H1 (cell line): ENCODE measurements at regions of chr2 and their contacts with region 1.

Region 1: DNA sequence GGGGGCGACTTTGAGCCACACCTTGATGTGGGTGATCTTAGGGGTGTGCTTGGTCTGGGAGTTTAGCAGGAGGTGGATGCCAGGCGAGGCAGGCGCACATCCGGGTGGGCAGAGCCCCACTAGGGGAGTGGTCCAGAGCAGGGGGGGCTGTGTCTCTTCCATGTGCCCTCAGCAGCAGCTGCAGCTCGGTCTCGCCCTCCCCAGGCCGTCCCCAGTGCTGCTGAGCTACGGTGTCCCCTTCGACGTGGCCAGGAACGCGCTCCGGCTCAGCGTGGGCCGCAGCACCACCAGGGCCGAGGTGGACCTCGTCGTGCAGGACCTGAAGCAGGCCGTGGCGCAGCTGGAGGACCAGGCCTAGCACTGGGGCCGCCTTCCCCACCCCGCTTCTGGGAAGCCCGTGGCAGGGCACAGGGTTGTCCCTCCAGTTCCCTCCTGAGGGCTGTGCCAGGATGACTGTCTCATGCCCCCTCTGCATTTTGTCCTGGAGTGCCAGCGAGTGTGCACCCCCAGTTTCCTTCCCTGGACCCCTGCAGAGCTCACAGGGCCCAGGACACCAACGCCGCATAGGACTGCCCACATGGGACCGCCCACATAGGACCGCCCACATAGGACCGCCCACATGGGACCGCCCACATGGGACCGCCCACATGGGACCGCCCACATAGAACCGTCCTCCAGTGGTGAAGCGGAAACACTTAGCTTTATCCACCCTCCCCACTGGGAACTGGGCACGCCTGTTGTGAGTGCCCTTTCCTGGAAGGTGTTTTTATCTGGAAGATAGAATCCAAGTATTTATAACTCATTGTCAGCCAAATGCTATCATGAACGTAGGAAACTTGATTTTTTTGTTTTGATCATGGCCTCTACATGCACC is 1.9 kb upstream of the ESPNL start:
- DNase-seq: peak; percentile 60 to 85
- H3K4me3 ChIP-seq: no peak overlapping the region
- H3K27ac ChIP-seq: peak overlapping the region; percentile 26; the same call in 1 of the 2 replicates
- H3K4me1 ChIP-seq: peaks cover 0 to 21% (median 13%) of the 10 kb centered on the region in 4 experiments; a peak in 6 of 7 replicates
- H3K27me3 ChIP-seq: no peaks in the 10 kb centered on the region
- CTCF ChIP-seq: no peak
- EP300 ChIP-seq: no peak
- POLR2A ChIP-seq: peak in 1 of 2 experiments; percentile 18; a peak in 1 of 3 replicates
- RAD21 ChIP-seq: no peak

Region 2: DNA sequence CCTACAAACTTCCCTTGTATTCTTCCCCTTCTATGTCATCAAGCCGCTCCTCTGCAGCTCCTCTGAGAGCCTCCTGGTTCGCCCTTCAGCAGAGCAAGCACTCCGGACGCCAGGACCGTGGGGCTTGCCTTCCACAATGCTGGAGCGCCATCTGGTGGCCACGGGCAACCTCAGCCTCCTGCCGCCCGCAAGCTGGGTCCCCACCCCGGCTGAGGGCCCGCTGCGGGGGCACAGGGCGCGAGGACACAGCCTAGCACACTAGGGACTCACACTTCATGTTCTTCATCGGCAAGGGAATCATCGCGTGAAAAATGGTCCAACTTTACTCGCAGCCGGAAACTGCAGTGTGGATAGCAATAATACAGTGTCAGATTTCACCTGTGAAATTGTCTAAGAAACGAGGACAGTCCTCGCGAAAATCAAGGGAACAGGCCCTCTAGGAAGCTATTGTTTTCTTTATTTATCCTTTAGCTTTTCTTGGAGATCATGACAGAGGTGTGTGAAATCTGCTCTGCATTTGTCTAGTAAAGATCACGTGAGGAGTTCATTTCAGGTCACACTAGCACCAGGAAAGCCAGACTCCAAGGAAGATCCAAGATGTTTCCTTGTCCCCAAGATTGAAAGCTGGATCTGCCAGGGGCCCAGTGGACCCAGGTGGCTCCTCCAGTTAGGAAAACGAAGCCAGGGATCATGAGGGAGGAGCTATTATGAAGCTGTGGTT is 526.1 kb before region 1 on chr2:
- CTCF ChIA-PET with region 1: no interaction called
- POLR2A ChIA-PET with region 1: no interaction called
- DNase-seq: peak; percentile 83 to 98
- H3K4me3 ChIP-seq: no peak overlapping the region
- H3K27ac ChIP-seq: no peak overlapping the region
- H3K4me1 ChIP-seq: peaks cover 0 to 8% (median 4%) of the 10 kb centered on the region in 4 experiments; a peak in 3 of 7 replicates
- H3K27me3 ChIP-seq: no peaks in the 10 kb centered on the region
- CTCF ChIP-seq: peak; percentile 98 to 99 (median 98)
- EP300 ChIP-seq: 0 out of 3 replicates have a peak, but pooled peaks of 1 of the 2 experiments have one; percentile 14
- POLR2A ChIP-seq: no peak
- RAD21 ChIP-seq: peak; percentile 99 to 100

Region 3: DNA sequence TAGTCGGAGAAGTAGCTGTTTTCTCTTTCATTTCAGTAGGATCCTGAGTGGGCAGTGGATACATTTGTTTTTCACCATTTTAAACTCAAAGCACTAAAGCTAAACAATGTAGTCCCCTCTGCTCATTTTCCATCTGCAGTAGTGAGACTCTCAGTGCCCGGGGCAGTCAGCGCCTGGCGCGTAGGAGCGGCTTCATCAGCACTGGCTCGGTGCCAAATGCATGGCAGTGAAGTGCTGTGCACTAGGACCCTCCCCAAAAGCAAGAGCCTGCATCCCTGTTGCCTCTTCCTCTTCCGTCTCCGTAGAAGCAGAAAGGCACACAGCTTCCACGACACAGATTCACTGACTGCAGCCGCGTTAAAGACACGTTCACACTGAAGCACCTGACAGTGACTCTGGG is 17.1 kb before region 1 on chr2:
- CTCF ChIA-PET with region 1: interaction called, 6 read pairs
- POLR2A ChIA-PET with region 1: interaction called, 17 read pairs
- DNase-seq: no peak
- H3K4me3 ChIP-seq: no peak overlapping the region
- H3K27ac ChIP-seq: 0 out of 2 replicates have a peak overlapping the region, but pooled peaks have one; percentile 20
- H3K4me1 ChIP-seq: no peaks in the 10 kb centered on the region; a peak in 1 of 7 replicates
- H3K27me3 ChIP-seq: no peaks in the 10 kb centered on the region
- CTCF ChIP-seq: no peak
- EP300 ChIP-seq: no peak
- POLR2A ChIP-seq: no peak
- RAD21 ChIP-seq: no peak